Naive thymus-derived CD4-positive, alpha-beta T cell (primary cell): ENCODE measurements at regions of chr10 and their contacts with region 1.

Region 1: DNA sequence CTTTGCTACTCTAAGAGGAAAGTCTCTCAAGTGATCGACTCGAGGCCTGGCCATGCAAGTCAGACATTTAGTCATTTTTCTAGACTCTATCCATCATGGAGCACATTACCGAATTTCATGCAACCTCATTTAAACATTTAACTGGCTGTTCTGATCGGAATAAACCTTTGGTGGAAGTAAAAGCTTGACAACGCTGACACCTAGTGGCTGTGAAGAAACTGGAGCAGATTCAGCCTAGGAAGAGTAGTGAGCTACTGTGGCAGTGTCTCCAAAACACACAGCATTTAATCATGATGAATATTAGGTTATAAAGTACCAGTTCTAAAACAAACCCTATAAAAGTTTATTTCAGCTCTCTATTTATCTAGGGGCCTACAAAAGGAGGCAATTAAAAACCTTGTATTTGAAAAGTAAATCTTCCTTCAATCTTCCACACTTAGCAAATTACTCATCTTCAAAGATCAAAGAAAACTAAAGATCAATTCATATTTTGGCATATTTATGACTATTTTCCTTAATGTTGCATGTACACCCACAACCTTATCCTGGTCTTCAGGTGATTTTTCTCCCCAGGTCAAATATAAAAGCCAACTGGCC is 175.0 kb downstream of the CTNNA3 start:
- DNase-seq: peak in 7 of 9 donors; percentile 10 to 46 (median 26)
- ATAC-seq: peak; percentile 74
- H3K4me3 ChIP-seq: no peak overlapping the region
- H3K4me3 Mint-ChIP-seq: no peak overlapping the region
- H3K27ac ChIP-seq: no peak overlapping the region
- H3K27ac Mint-ChIP-seq: no peak overlapping the region
- H3K4me1 ChIP-seq: no peaks in the 10 kb centered on the region
- H3K4me1 Mint-ChIP-seq: peaks cover 0 to 10% (median 3%) of the 10 kb centered on the region in 7 donors
- H3K27me3 ChIP-seq: no peaks in the 10 kb centered on the region
- H3K27me3 Mint-ChIP-seq: peaks cover 0 to 14% (median 4%) of the 10 kb centered on the region in 5 donors

Region 2: DNA sequence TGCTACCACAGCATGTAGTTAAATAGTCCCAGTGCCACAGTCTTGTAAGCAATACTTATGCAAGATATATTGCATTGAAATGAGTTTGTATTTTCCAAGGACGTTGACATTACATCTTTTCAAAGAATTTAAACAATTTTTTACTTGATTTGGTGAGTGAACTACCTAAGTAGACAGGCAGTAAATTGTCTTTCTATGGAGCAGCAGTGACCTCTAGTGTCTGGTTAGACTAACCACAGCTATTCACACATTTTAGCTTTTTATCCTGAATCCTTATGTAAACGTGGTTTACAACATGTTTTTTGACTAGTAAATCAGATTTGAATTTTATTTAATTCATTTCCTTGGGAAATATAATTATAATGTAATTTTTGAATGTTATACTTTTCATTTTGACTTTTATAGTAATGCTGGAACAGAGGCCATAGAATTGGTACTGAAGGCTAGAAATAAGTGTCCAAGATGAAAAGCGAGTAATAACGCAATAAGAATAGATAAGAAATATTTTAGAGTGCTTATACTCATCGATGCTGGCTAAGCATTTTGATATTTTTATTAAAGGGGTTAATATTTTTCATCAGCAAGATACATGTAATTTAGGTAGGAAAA is 589.6 kb before region 1 on chr10:
- CTCF ChIA-PET with region 1: no interaction called
- POLR2A ChIA-PET with region 1: no interaction called
- intact Hi-C with region 1: loop called in 1 of 2 experiments (anchors 10 kb)
- DNase-seq: no peak
- ATAC-seq: no peak
- H3K4me3 ChIP-seq: no peak overlapping the region
- H3K4me3 Mint-ChIP-seq: no peak overlapping the region
- H3K27ac ChIP-seq: no peak overlapping the region
- H3K27ac Mint-ChIP-seq: no peak overlapping the region
- H3K4me1 ChIP-seq: no peaks in the 10 kb centered on the region
- H3K4me1 Mint-ChIP-seq: peaks cover 0 to 8% (median 0%) of the 10 kb centered on the region in 7 donors
- H3K27me3 ChIP-seq: no peaks in the 10 kb centered on the region
- H3K27me3 Mint-ChIP-seq: peaks cover 22 to 47% (median 36%) of the 10 kb centered on the region in 5 donors

Region 3: DNA sequence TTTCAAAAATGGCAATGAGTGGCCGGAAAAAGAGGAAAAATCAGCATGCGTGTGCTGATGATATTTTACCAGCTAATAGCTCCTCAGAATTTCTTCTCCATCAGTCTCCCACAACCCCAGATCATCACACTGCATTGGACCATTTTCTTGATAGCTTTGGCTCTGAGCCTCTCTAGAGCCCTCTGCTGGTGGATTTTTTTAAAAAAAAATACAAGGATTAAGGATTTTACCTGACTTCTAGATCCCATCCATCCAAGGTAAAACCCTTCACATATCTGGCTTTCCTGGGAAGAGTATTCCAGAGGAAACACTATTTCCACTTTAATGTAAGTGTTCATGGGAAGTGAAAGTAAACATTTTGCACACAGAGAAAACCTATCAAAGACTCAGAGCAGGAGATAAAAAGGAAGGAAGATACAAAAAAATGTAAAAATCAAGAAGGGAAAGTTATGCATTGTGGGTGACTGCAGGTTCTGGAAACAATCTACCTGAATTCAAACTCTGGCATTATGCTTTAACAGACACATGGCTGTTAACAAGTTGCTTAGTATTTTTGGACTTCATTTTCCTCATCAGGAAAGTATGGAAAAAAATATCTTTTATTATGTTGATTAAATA is 214.3 kb before region 1 on chr10:
- CTCF ChIA-PET with region 1: no interaction called
- POLR2A ChIA-PET with region 1: no interaction called
- intact Hi-C with region 1: loop called in 1 of 2 experiments (anchors 10 kb)
- DNase-seq: no peak
- ATAC-seq: no peak
- H3K4me3 ChIP-seq: no peak overlapping the region
- H3K4me3 Mint-ChIP-seq: no peak overlapping the region
- H3K27ac ChIP-seq: no peak overlapping the region
- H3K27ac Mint-ChIP-seq: no peak overlapping the region
- H3K4me1 ChIP-seq: no peaks in the 10 kb centered on the region
- H3K4me1 Mint-ChIP-seq: no peaks in the 10 kb centered on the region
- H3K27me3 ChIP-seq: no peaks in the 10 kb centered on the region
- H3K27me3 Mint-ChIP-seq: peaks cover 0 to 3% (median 0%) of the 10 kb centered on the region in 5 donors